B cell (primary cell): ENCODE measurements at regions of chr12 and their contacts with region 1.

Region 1: GRCh38 chr12:1939801-1940607 is 21.6 kb upstream of the CACNA2D4 start:
- DNase-seq: peak; percentile 89
- ATAC-seq: peak; percentile 97
- H3K4me3 ChIP-seq: no peak overlapping the region
- H3K4me3 Mint-ChIP-seq: no peak overlapping the region
- H3K27ac ChIP-seq: no peak overlapping the region
- H3K27ac Mint-ChIP-seq: peak overlapping the region; percentile 10
- H3K4me1 ChIP-seq: peaks cover 4 to 5% of the 10 kb centered on the region in 2 donors
- H3K4me1 Mint-ChIP-seq: peaks cover 5% of the 10 kb centered on the region
- H3K27me3 ChIP-seq: no peaks in the 10 kb centered on the region
- H3K27me3 Mint-ChIP-seq: no peaks in the 10 kb centered on the region
- CTCF ChIP-seq: peak; percentile 99

Region 2: GRCh38 chr12:1634590-1635191 is 305.3 kb before region 1 on chr12:
- CTCF ChIA-PET with region 1: interaction called, 27 read pairs
- POLR2A ChIA-PET with region 1: no interaction called
- intact Hi-C with region 1: loop called (anchors 1 kb)
- DNase-seq: peak; percentile 69
- ATAC-seq: peak; percentile 50
- H3K4me3 ChIP-seq: no peak overlapping the region
- H3K4me3 Mint-ChIP-seq: no peak overlapping the region
- H3K27ac ChIP-seq: no peak overlapping the region
- H3K27ac Mint-ChIP-seq: no peak overlapping the region
- H3K4me1 ChIP-seq: peaks cover 19 to 20% of the 10 kb centered on the region in 2 donors
- H3K4me1 Mint-ChIP-seq: peaks cover 19% of the 10 kb centered on the region
- H3K27me3 ChIP-seq: peaks cover 0 to 52% (median 31%) of the 10 kb centered on the region in 4 experiments
- H3K27me3 Mint-ChIP-seq: peaks cover 30% of the 10 kb centered on the region
- CTCF ChIP-seq: peak; percentile 91

Region 3: DNA sequence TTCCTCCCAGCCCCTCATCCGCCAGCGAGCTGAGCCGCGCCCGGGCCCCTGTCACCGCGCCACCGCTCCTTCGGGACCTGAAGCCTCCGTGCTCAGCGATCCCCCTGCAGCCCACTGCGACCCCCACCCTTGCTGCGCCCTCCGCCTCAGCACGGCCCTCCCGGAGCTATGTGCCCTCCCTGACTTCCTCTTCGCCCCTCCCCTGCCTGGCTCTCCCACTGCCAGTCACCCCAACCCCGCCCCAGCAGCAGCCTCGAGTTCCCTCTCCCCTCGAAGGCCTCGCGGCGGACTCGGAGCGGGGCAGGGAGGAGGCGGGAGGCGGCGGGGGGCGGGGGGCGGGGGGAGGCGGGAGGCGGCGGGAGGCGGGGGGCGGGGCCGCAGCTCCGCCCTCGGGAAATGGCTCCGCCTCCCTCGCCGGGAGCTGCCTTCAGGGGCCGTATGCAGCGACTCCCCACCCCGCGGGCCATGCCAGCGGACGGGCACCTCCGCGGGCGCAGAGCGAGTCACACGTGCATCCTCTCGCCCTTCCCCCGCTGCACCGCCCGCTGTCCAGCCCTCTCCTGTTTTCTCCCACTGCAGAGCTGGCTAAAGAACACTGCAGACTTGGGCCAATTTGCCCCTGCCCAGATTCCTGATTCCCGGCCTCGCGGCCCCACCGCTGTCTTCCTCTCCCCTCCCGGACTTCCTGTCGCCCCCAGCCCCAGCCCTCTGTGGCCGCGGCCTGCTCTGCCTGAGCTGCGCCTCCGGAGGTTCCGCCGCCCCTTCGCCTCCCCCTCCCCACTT is 278.3 kb before region 1 on chr12:
- CTCF ChIA-PET with region 1: interaction called, 26 read pairs
- POLR2A ChIA-PET with region 1: interaction called, 4 read pairs
- intact Hi-C with region 1: no loop called
- DNase-seq: peak; percentile 84
- ATAC-seq: peak; percentile 90
- H3K4me3 ChIP-seq: peak overlapping the region in 4 of 5 experiments; percentile 54 to 71 (median 63)
- H3K4me3 Mint-ChIP-seq: peak overlapping the region; percentile 86
- H3K27ac ChIP-seq: peak overlapping the region in 1 of 2 donors; percentile 18
- H3K27ac Mint-ChIP-seq: peak overlapping the region; percentile 88
- H3K4me1 ChIP-seq: peaks cover 0 to 1% of the 10 kb centered on the region in 2 donors
- H3K4me1 Mint-ChIP-seq: peaks cover 18% of the 10 kb centered on the region
- H3K27me3 ChIP-seq: no peaks in the 10 kb centered on the region
- H3K27me3 Mint-ChIP-seq: no peaks in the 10 kb centered on the region
- CTCF ChIP-seq: no peak

Region 4: GRCh38 chr12:1838205-1838993 is 101.6 kb before region 1 on chr12:
- CTCF ChIA-PET with region 1: interaction called, 12 read pairs
- POLR2A ChIA-PET with region 1: no interaction called
- intact Hi-C with region 1: no loop called
- DNase-seq: no peak
- ATAC-seq: no peak
- H3K4me3 ChIP-seq: no peak overlapping the region
- H3K4me3 Mint-ChIP-seq: no peak overlapping the region
- H3K27ac ChIP-seq: no peak overlapping the region
- H3K27ac Mint-ChIP-seq: no peak overlapping the region
- H3K4me1 ChIP-seq: peaks cover 13 to 18% of the 10 kb centered on the region in 2 donors
- H3K4me1 Mint-ChIP-seq: peaks cover 30% of the 10 kb centered on the region
- H3K27me3 ChIP-seq: peaks cover 0 to 7% (median 0%) of the 10 kb centered on the region in 4 experiments
- H3K27me3 Mint-ChIP-seq: peaks cover 12% of the 10 kb centered on the region
- CTCF ChIP-seq: no peak

Region 5: DNA sequence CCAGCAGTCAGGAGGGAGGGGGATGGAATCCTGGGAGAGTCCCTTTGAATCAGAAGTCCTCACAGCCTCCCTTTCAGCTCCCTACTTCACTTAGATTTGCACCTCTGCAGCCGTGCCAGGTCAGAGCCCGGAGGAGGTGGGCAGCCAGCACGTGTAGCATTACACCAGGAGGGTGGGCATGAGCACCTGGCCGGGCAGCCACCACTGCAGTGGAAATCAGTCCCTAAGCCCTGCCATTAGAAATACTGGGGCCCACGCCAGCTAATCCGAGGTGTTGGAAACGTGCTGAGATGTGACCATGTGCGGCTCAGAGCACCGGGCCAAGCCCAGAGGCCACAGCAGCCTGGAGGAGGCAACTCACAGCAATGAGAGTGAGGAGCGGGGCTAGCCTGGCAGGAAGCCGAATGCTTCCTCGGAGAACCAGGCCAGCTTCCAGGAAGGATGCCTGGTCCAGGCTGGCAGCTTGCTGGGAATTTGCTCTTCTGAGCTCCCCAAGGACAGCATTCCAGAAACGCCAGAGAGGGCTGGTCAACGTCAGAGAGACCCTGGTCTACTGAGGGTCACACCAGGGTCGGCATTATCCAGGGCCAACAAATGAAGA is 12.2 kb before region 1 on chr12:
- CTCF ChIA-PET with region 1: interaction called, 63 read pairs
- POLR2A ChIA-PET with region 1: no interaction called
- intact Hi-C with region 1: no loop called
- DNase-seq: no peak
- ATAC-seq: no peak
- H3K4me3 ChIP-seq: no peak overlapping the region
- H3K4me3 Mint-ChIP-seq: no peak overlapping the region
- H3K27ac ChIP-seq: no peak overlapping the region
- H3K27ac Mint-ChIP-seq: no peak overlapping the region
- H3K4me1 ChIP-seq: peaks cover 64 to 76% of the 10 kb centered on the region in 2 donors
- H3K4me1 Mint-ChIP-seq: peaks cover 73% of the 10 kb centered on the region
- H3K27me3 ChIP-seq: no peaks in the 10 kb centered on the region
- H3K27me3 Mint-ChIP-seq: no peaks in the 10 kb centered on the region
- CTCF ChIP-seq: no peak

Region 6: DNA sequence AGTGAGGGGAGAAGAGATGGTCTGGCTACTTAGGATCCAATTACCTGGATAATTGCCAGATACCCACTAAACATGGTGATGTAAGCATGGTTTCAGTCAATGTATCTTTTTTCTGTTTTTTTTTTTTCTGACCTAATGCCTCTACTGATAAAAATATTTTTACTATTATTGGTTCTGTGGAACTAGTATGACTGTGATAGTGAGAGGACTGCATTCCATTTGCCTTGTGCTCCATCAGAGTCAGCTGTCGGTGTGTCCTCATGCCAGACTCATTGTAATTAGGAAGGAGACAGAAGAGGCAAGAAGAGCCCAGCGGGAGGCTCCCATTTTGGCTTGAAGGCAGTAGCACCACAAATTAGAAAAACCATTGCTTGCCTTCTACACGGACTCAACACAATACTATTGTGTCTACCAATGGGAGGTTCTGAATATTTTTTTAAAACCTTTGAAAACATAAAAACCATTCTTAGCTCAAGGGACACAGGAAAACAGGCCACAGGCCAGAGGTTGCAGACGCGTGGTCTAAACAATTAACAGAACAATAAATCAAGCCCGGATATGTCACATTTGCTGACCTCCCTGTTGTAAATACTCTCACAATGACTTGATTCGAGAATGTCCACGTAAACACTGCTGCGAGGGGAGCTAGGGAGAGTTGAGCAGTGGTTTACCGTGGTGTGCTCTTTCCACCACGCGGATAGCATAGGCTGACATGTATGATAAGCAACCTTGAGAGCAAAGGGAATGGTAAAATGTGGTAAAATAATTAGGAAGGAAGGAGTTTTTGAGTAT is 77.7 kb after region 1 on chr12:
- CTCF ChIA-PET with region 1: no interaction called
- POLR2A ChIA-PET with region 1: no interaction called
- intact Hi-C with region 1: no loop called
- DNase-seq: no peak
- ATAC-seq: no peak
- H3K4me3 ChIP-seq: no peak overlapping the region
- H3K4me3 Mint-ChIP-seq: no peak overlapping the region
- H3K27ac ChIP-seq: no peak overlapping the region
- H3K27ac Mint-ChIP-seq: no peak overlapping the region
- H3K4me1 ChIP-seq: no peaks in the 10 kb centered on the region
- H3K4me1 Mint-ChIP-seq: no peaks in the 10 kb centered on the region
- H3K27me3 ChIP-seq: peaks cover 0 to 4% (median 0%) of the 10 kb centered on the region in 4 experiments
- H3K27me3 Mint-ChIP-seq: peaks cover 12% of the 10 kb centered on the region
- CTCF ChIP-seq: no peak

Region 7: GRCh38 chr12:2583091-2583497 is 643.1 kb after region 1 on chr12:
- CTCF ChIA-PET with region 1: no interaction called
- POLR2A ChIA-PET with region 1: no interaction called
- intact Hi-C with region 1: no loop called
- DNase-seq: peak; percentile 36
- ATAC-seq: no peak
- H3K4me3 ChIP-seq: no peak overlapping the region
- H3K4me3 Mint-ChIP-seq: no peak overlapping the region
- H3K27ac ChIP-seq: no peak overlapping the region
- H3K27ac Mint-ChIP-seq: no peak overlapping the region
- H3K4me1 ChIP-seq: no peaks in the 10 kb centered on the region
- H3K4me1 Mint-ChIP-seq: peaks cover 3% of the 10 kb centered on the region
- H3K27me3 ChIP-seq: peaks cover 0 to 20% (median 5%) of the 10 kb centered on the region in 4 experiments
- H3K27me3 Mint-ChIP-seq: peaks cover 41% of the 10 kb centered on the region
- CTCF ChIP-seq: peak; percentile 59